ENCODE measurements at regions of chr13 and their contacts with region 1.

Region 1: DNA sequence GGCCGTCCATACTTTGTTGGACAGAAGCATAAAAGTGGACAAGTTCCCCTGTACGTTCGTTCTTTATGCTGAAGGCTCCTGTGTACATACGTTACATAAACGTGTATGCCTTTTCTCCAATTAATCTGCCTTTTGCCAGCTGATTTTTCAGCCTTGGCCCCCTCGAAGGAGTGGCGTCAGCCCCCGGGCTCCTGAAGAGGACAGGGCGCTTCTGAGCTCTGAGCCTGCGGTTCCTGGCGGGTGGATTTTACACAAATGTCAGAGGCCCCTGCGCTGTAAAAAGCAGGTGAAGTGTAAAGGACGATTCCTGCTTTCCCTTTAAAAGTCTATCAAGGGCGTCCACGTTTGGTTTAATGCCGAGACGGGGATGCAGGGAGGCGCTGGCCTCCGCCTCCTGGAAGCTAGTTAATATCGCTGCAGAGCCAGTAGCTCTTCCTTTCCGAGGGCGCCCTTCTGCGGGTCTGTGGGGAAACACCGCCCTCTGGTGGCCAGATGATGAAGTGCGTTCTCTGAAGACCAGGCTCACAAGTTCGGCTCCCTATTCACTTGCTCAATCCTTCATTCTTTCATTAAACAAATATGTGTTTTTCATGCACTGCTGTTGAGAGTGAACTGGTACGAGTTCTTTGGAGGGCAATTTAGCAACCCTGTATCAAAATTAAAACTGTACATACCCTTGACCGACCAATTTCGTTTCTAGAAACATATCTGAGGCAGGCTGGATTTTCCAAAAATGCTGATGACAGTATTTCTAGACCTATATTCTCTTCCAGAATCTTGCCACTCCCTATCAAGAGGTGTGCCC is 62.0 kb downstream of the GPR12 start:
- DNase-seq: peak; percentile 88
- H3K4me3 ChIP-seq: no peak overlapping the region
- H3K27ac ChIP-seq: no peak overlapping the region
- H3K4me1 ChIP-seq: no peaks in the 10 kb centered on the region
- H3K27me3 ChIP-seq: peaks cover 0 to 4% of the 10 kb centered on the region in 2 experiments
- CTCF ChIP-seq: peak; percentile 89 to 92
- POLR2A ChIP-seq: no peak

Region 2: GRCh38 chr13:26216042-26216441 is 482.6 kb before region 1 on chr13:
- CTCF ChIA-PET with region 1: interaction called, 13 read pairs
- POLR2A ChIA-PET with region 1: no interaction called
- dilution Hi-C with region 1: no loop called
- intact Hi-C with region 1: loop called (anchors 1 kb)
- DNase-seq: no peak
- H3K4me3 ChIP-seq: no peak overlapping the region
- H3K27ac ChIP-seq: no peak overlapping the region
- H3K4me1 ChIP-seq: peaks cover 13% of the 10 kb centered on the region
- H3K27me3 ChIP-seq: no peaks in the 10 kb centered on the region
- CTCF ChIP-seq: no peak
- POLR2A ChIP-seq: no peak

Region 3: GRCh38 chr13:26476111-26476781 is 222.3 kb before region 1 on chr13:
- CTCF ChIA-PET with region 1: interaction called, 257 read pairs
- POLR2A ChIA-PET with region 1: no interaction called
- dilution Hi-C with region 1: loop called (anchors 25 kb)
- intact Hi-C with region 1: no loop called
- DNase-seq: peak; percentile 24
- H3K4me3 ChIP-seq: peak overlapping the region in 1 of 3 experiments; percentile 6
- H3K27ac ChIP-seq: peak overlapping the region; percentile 6
- H3K4me1 ChIP-seq: peaks cover 4% of the 10 kb centered on the region
- H3K27me3 ChIP-seq: no peaks in the 10 kb centered on the region
- CTCF ChIP-seq: no peak
- POLR2A ChIP-seq: no peak

Region 4: DNA sequence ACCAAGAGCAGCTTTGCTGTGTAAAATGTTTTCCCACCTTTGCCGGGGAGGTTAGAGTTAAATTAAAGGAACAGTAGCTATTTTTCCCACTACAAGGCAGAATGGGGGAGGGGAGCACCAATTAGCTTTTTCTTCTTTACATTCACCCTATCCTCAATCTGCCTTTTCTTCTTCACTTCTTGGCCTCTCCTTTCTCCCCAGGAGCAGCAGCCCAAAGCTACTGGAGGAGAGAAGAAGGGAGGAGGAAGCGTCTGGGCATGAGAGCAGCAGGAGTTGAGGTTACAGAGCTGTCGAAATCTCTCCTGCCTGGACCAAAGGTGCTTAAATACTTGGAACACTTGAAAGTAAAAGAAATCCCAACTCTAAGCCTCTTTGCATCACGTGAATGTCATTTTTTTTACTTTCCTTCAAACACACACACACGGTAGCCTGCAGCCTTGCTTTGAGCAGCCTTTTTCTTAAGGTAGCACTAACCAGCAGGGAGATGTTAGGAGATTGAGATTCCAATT is 180.1 kb before region 1 on chr13:
- CTCF ChIA-PET with region 1: interaction called, 10 read pairs
- POLR2A ChIA-PET with region 1: no interaction called
- dilution Hi-C with region 1: no loop called
- intact Hi-C with region 1: no loop called
- DNase-seq: no peak
- H3K4me3 ChIP-seq: no peak overlapping the region
- H3K27ac ChIP-seq: no peak overlapping the region
- H3K4me1 ChIP-seq: no peaks in the 10 kb centered on the region
- H3K27me3 ChIP-seq: peaks cover 7 to 11% of the 10 kb centered on the region in 2 experiments
- CTCF ChIP-seq: no peak
- POLR2A ChIP-seq: no peak

Region 5: DNA sequence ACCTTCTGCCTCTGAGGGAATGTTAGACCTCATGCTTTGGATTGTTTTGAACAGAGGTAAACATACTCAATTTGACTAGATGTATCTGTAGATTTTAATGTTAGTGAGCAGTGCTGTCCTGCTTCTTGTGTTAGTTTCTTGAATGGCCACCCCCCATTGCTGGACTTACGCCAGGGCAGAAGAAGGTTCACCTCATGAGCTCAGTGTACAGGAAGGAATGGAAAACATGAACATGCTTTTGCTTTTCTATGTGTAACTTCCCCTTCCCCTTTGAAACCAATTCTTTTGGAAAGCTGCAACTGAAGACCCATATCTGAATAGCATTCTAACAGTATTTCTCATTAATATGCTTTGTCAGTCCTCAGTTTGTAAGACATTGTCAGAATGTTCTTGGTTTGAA is 108.8 kb before region 1 on chr13:
- CTCF ChIA-PET with region 1: interaction called, 33 read pairs
- POLR2A ChIA-PET with region 1: no interaction called
- dilution Hi-C with region 1: no loop called
- intact Hi-C with region 1: loop called (anchors 1 kb)
- DNase-seq: peak; percentile 96
- H3K4me3 ChIP-seq: peak overlapping the region in 2 of 3 experiments; percentile 26 to 52
- H3K27ac ChIP-seq: peak overlapping the region; percentile 87
- H3K4me1 ChIP-seq: peaks cover 70% of the 10 kb centered on the region
- H3K27me3 ChIP-seq: no peaks in the 10 kb centered on the region
- CTCF ChIP-seq: no peak
- POLR2A ChIP-seq: no peak

Region 6: DNA sequence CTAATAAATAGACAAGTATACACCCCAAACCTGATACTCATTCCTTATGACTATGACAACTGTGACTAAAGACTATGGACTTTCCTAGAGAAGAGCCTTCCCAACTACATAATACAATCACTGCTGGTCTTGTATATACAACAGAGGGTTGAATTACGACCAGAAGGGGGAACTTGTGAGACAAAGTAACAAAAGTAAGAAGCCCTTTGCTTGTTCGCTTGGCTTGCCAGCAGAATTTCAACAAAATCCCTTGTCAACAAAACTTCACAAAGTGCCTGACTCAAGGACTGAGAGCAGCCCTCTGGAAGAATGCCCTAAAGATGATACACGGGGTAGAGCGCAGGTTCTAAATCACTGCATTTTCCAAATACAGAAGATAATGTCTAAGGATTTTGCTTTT is 41.7 kb before region 1 on chr13:
- CTCF ChIA-PET with region 1: interaction called, 13 read pairs
- POLR2A ChIA-PET with region 1: no interaction called
- dilution Hi-C with region 1: no loop called
- intact Hi-C with region 1: no loop called
- DNase-seq: no peak
- H3K4me3 ChIP-seq: no peak overlapping the region
- H3K27ac ChIP-seq: no peak overlapping the region
- H3K4me1 ChIP-seq: no peaks in the 10 kb centered on the region
- H3K27me3 ChIP-seq: no peaks in the 10 kb centered on the region
- CTCF ChIP-seq: no peak
- POLR2A ChIP-seq: no peak

Region 7: DNA sequence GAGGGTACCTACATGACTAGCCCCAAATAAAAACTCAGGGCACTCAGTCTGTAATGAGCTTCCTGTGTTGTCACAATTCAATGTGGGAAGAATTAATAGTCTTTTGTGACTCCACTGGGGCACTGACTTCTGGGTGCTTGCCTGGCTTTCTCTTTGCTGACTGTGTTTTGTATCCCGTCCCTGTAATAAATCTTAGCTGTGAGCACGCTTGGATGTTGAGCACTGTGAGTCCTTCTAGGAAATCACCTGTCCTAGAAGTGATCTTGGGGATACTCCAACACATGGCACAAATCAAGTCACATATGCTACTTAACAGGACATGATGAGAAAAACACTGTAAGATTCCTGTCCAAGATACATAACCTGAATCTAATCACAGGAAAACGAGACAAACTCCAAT is 390.0 kb after region 1 on chr13:
- CTCF ChIA-PET with region 1: no interaction called
- POLR2A ChIA-PET with region 1: no interaction called
- dilution Hi-C with region 1: no loop called
- intact Hi-C with region 1: no loop called
- DNase-seq: no peak
- H3K4me3 ChIP-seq: no peak overlapping the region
- H3K27ac ChIP-seq: no peak overlapping the region
- H3K4me1 ChIP-seq: no peaks in the 10 kb centered on the region
- H3K27me3 ChIP-seq: no peaks in the 10 kb centered on the region
- CTCF ChIP-seq: no peak
- POLR2A ChIP-seq: no peak

Measured in endothelial cell of umbilical vein (primary cell).